IMR-90 (cell line): ENCODE measurements at regions of chr3 and their contacts with region 1.

Region 1: GRCh38 chr3:129249276-129250065 is at the start of gene COPG1:
- DNase-seq: peak; percentile 87
- ATAC-seq: peak; percentile 83
- H3K4me3 ChIP-seq: peak within 1 kb of the TSS; percentile 67
- H3K27ac ChIP-seq: peak within 1 kb of the TSS; percentile 96
- H3K4me1 ChIP-seq: peaks cover 16% of the 10 kb centered on the region
- H3K27me3 ChIP-seq: no peaks in the 10 kb centered on the region
- CTCF ChIP-seq: no peak
- POLR2A ChIP-seq: peak; percentile 97
- RAD21 ChIP-seq: no peak
- total RNA-seq, gene COPG1: 440 and 446 TPM in 2 replicates

Region 2: GRCh38 chr3:129052675-129053074 is 196.8 kb before region 1 on chr3:
- CTCF ChIA-PET with region 1: interaction called, 5 read pairs
- POLR2A ChIA-PET with region 1: no interaction called
- dilution Hi-C with region 1: no loop called
- in situ Hi-C with region 1: loop called (anchors 10 kb)
- intact Hi-C with region 1: loop called (anchors 5 kb)
- DNase-seq: no peak
- ATAC-seq: no peak
- H3K4me3 ChIP-seq: no peak overlapping the region
- H3K27ac ChIP-seq: no peak overlapping the region
- H3K4me1 ChIP-seq: no peaks in the 10 kb centered on the region
- H3K27me3 ChIP-seq: peaks cover 15% of the 10 kb centered on the region
- CTCF ChIP-seq: no peak
- POLR2A ChIP-seq: no peak
- RAD21 ChIP-seq: no peak

Region 3: GRCh38 chr3:129121792-129122411 is 127.6 kb before region 1 on chr3 and contains the start of gene RAB43:
- CTCF ChIA-PET with region 1: no interaction called
- POLR2A ChIA-PET with region 1: no interaction called
- dilution Hi-C with region 1: no loop called
- in situ Hi-C with region 1: no loop called
- intact Hi-C with region 1: loop called (anchors 2 kb)
- DNase-seq: peak; percentile 56
- ATAC-seq: peak; percentile 78
- H3K4me3 ChIP-seq: peak within 1 kb of the TSS; percentile 62
- H3K27ac ChIP-seq: peak within 1 kb of the TSS; percentile 75
- H3K4me1 ChIP-seq: peaks cover 21% of the 10 kb centered on the region
- H3K27me3 ChIP-seq: no peaks in the 10 kb centered on the region
- CTCF ChIP-seq: no peak
- POLR2A ChIP-seq: no peak
- RAD21 ChIP-seq: no peak
- total RNA-seq, gene RAB43: 9.2 and 9.9 TPM in 2 replicates

Region 4: DNA sequence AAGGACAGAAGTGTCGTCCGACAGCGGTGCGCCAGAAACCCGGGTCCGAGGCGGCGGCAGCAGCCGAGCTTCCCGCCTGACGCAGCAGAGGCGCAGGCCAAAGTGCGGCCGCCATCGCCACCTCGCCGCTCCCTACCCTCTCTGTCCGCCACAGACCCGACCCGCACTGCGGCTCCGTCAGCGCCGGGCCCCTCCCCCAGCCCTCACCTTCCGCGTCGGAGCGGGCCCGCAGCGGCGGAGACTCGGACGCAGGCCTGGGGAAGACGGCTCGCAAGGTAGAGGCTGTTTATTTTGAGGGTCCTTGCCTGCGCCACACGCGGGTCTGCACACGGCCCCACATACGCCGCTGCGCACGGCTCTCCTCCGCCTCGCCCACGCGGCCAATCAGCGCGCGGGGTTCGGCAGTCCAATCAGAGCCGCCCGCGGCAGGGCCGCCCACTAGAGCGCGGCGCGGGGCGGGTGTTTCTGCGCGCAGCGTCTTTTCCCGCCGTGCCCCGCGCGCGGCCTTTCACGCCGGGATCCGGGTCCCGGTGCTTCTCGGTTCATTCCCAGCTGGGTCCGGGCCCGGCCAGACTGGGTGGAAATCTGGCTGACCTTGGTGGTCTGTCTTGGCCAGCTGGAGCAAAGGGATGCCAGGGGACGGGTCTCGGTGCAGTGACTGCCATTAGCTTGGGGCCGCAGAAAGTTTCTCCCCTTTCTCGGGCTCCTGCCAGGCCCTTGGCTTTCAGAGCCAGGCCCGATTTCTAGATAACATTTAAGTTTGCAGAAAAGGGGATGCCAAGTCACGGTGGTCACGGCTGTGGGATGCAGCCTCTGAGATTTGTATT is 65.7 kb before region 1 on chr3 and contains the start of gene CNBP:
- CTCF ChIA-PET with region 1: interaction called, 6 read pairs
- POLR2A ChIA-PET with region 1: interaction called, 3 read pairs
- dilution Hi-C with region 1: no loop called
- in situ Hi-C with region 1: no loop called
- intact Hi-C with region 1: loop called (anchors 1 kb)
- DNase-seq: peak; percentile 92
- ATAC-seq: peak; percentile 99
- H3K4me3 ChIP-seq: peak within 1 kb of the TSS; percentile 89
- H3K27ac ChIP-seq: peak within 1 kb of the TSS; percentile 94
- H3K4me1 ChIP-seq: peaks cover 5% of the 10 kb centered on the region
- H3K27me3 ChIP-seq: no peaks in the 10 kb centered on the region
- CTCF ChIP-seq: no peak
- POLR2A ChIP-seq: peak; percentile 97
- RAD21 ChIP-seq: no peak
- total RNA-seq, gene CNBP: 223 and 266 TPM in 2 replicates